Sciatic nerve (tissue), 2 donors: ENCODE measurements at regions of chr12 and their contacts with region 1.

Region 1: GRCh38 chr12:73769337-73769736 is 768.3 kb upstream of the ATXN7L3B start:
- DNase-seq: no peak
- ATAC-seq: no peak

Region 2: GRCh38 chr12:75419841-75420240 is 1650.5 kb after region 1 on chr12:
- intact Hi-C with region 1: loop called (anchors 10 kb)
- DNase-seq: no peak
- ATAC-seq: no peak